Transverse colon (tissue), 4 donors: ENCODE measurements at regions of chr16 and their contacts with region 1.

Region 1: GRCh38 chr16:68520649-68521086 is 18.4 kb upstream of the ZFP90 start:
- DNase-seq: peak; percentile 90
- H3K4me3 ChIP-seq: peak overlapping the region in 3 of 4 donors; percentile 6 to 41 (median 16)
- H3K27ac ChIP-seq: no peak overlapping the region
- H3K4me1 ChIP-seq: peaks cover 0 to 8% (median 7%) of the 10 kb centered on the region in 4 donors
- H3K27me3 ChIP-seq: no peaks in the 10 kb centered on the region
- CTCF ChIP-seq: peak; percentile 98 to 99 (median 98)
- EP300 ChIP-seq: no peak
- POLR2A ChIP-seq: no peak

Region 2: GRCh38 chr16:68396481-68396880 is 124.2 kb before region 1 on chr16:
- in situ Hi-C with region 1: loop called in 2 of 4 experiments (anchors 10 to 25 kb)
- intact Hi-C with region 1: no loop called
- DNase-seq: peak; percentile 69
- H3K4me3 ChIP-seq: no peak overlapping the region
- H3K27ac ChIP-seq: no peak overlapping the region
- H3K4me1 ChIP-seq: peaks cover 0 to 9% (median 4%) of the 10 kb centered on the region in 4 donors
- H3K27me3 ChIP-seq: no peaks in the 10 kb centered on the region
- CTCF ChIP-seq: peak; percentile 51 to 84 (median 67)
- EP300 ChIP-seq: no peak
- POLR2A ChIP-seq: no peak